ENCODE measurements at regions of chr1 and their contacts with region 1.

Region 1: DNA sequence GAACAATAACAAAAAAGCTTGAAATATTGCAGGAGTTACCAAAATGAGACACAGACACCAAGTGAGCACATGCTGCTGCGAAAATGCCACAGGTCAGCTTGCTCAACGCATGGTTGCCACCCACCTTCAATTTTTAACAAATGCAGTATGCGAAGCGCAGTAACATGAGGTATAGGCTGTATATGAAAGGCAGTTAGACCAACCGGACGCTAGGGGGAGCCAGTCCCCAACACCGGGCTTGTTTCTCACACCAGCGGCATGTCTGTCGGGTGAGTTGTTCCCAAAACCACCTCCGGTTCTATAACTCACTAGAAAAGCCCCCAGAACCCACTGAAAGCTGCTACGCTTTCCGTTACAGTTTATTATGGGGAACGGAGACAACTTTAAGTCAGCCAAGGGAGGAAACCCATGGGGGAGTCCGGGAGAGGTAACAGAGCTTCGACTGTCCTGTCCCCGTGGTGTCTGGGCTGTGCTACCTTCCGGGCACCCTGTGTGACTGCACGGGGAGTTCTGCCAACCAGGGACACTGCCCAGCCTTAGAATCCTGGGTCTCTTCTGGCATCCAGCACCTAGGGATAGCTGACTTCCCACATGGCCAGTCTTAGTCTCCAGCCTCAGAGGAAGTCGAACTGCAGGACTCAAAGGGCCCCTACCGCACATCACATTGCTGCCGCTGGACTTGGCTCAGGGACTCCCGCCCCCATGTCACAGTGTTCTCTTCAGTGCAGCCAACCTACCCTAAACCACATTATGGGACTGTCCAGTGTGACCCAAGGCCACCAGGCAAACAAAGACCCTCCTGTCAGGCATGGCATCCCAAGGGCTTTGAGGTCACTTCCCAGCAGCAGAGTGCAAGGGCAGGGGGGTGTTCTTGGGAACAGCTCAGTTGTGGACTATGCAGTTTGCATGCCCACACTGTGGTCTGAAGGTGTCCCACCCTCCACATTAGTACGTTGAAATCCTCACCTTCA is 14.0 kb downstream of the RNF187 start:
- DNase-seq: peak; percentile 25
- H3K4me3 ChIP-seq: no peak overlapping the region
- H3K27me3 ChIP-seq: 0 out of 2 replicates have a peak, but pooled peaks cover 1% of the 10 kb centered on the region
- CTCF ChIP-seq: peak; percentile 93

Region 2: DNA sequence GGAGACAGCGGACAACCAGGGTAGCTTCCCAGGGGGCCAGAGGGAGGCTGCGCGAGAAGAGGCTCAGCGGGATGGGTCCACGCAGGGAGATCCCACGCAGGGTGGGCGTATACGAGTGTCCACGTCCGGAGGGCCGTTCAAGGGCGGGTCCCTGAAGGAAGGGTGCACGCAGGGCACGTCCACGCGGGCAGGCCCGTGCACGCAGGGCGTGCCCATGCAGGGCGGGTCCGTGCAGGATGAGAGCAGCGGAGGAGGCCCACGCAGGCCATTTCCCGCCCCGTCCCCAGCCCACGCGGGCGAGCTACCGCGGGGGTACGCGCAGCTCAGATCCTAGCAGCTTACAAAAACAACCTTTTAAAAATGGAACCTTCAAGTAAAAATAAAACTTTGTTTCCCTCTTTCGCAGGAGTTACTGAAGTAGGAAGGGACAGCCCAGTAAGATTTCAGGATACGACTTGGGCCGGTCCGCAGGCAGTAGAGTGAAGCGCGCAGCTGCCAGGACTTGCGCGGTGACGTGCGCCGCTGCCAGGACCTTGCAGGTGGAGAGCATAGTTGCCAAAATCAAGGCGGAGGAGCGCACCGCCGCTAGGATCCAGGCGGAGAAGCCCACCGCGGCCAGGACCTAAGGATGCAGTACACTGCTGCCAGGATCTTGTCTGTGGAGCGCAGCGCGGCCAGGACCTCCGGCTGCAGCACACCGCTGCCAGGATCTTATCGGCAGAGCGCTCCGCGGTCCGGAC is 14.4 kb before region 1 on chr1:
- CTCF ChIA-PET with region 1: interaction called, 14 read pairs
- POLR2A ChIA-PET with region 1: no interaction called
- DNase-seq: peak; percentile 54
- H3K4me3 ChIP-seq: peak overlapping the region; percentile 68
- H3K27me3 ChIP-seq: 0 out of 2 replicates have a peak, but pooled peaks cover 1% of the 10 kb centered on the region
- CTCF ChIP-seq: no peak

Region 3: GRCh38 chr1:228515200-228515834 is 14.1 kb after region 1 on chr1:
- CTCF ChIA-PET with region 1: interaction called, 40 read pairs
- POLR2A ChIA-PET with region 1: no interaction called
- DNase-seq: no peak
- H3K4me3 ChIP-seq: no peak overlapping the region
- H3K27me3 ChIP-seq: peaks cover 12% of the 10 kb centered on the region
- CTCF ChIP-seq: peak; percentile 70

Measured in BJ (cell line).